A673 (cell line): ENCODE measurements at regions of chr12 and their contacts with region 1.

Region 1: DNA sequence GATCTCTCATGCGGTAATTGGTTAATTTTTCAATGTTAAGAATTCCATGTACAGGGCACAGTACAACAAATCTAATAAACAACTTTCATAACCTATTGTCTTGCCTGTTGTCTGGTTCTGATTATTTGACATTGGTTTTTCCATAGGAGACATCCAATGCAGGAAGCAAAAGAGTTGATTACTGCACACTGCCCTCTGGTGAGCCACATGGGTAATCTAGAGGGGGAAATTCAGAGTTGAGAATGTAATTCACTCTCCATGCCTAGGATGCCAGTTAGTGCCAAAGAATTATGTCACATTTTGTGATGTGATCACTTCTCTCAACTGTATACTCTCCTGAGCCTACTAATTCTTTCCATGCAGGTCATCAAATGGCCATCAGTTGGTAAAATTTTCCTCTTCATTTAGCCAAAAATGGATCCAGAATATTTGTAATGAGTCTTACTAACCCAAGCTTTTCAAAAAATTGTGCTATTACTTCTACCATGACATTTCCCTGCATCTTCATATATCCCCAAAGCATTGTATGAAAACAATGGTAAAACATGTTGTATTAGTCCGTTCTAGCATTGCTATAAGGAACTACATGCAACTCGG is 17.7 kb upstream of the CCDC91 start:
- DNase-seq: peak; percentile 77
- H3K4me3 ChIP-seq: no peak overlapping the region
- H3K27ac ChIP-seq: no peak overlapping the region
- H3K4me1 ChIP-seq: no peaks in the 10 kb centered on the region
- H3K27me3 ChIP-seq: no peaks in the 10 kb centered on the region
- CTCF ChIP-seq: peak; percentile 79

Region 2: DNA sequence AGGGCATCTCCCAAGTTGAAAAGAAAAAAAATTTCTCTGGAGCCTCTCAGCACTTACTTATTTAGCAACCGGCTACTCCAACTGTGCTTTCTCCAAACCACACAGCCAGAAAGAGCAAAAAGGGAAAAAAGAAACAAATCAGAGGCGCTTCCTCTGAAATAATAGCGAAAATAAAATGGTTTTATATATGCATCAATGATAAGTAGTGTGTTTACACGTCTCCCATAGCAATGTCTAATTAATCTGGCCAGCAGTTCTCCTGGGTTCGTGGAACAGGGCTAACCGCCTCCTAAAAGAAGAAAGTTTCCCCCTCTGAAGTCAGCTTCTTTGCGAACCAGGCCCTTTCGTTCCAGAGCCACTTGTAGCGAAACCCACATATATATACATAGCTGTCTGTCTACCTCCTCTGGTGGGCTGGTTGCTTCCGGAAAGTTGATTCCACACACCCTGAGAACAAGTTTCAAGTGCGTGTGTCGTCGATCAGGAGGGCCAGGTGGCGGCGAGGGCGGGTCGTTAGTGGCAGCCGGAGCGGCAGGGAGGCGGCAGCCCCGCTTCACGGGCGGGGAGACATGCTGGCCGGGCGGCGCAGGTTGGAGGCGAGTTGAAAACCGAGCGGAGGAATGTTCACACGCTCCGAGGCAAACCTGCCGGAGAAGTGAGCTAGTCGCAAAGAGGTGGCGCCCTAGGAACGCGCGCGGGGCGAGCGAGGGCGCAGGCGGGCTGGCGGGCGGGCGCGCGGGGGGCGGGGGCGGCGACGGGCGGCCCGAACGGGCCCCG is 202.7 kb before region 1 on chr12:
- CTCF ChIA-PET with region 1: interaction called, 3 read pairs
- POLR2A ChIA-PET with region 1: no interaction called
- intact Hi-C with region 1: loop called (anchors 2 kb)
- DNase-seq: peak; percentile 81
- H3K4me3 ChIP-seq: peak overlapping the region; percentile 53
- H3K27ac ChIP-seq: no peak overlapping the region
- H3K4me1 ChIP-seq: peaks cover 39% of the 10 kb centered on the region
- H3K27me3 ChIP-seq: peaks cover 5% of the 10 kb centered on the region
- CTCF ChIP-seq: peak; percentile 39

Region 3: GRCh38 chr12:28089338-28089737 is 83.2 kb before region 1 on chr12:
- CTCF ChIA-PET with region 1: no interaction called
- POLR2A ChIA-PET with region 1: no interaction called
- intact Hi-C with region 1: no loop called
- DNase-seq: peak; percentile 95
- H3K4me3 ChIP-seq: peak overlapping the region; percentile 5
- H3K27ac ChIP-seq: peak overlapping the region; percentile 78
- H3K4me1 ChIP-seq: peaks cover 58% of the 10 kb centered on the region
- H3K27me3 ChIP-seq: no peaks in the 10 kb centered on the region
- CTCF ChIP-seq: no peak

Region 4: DNA sequence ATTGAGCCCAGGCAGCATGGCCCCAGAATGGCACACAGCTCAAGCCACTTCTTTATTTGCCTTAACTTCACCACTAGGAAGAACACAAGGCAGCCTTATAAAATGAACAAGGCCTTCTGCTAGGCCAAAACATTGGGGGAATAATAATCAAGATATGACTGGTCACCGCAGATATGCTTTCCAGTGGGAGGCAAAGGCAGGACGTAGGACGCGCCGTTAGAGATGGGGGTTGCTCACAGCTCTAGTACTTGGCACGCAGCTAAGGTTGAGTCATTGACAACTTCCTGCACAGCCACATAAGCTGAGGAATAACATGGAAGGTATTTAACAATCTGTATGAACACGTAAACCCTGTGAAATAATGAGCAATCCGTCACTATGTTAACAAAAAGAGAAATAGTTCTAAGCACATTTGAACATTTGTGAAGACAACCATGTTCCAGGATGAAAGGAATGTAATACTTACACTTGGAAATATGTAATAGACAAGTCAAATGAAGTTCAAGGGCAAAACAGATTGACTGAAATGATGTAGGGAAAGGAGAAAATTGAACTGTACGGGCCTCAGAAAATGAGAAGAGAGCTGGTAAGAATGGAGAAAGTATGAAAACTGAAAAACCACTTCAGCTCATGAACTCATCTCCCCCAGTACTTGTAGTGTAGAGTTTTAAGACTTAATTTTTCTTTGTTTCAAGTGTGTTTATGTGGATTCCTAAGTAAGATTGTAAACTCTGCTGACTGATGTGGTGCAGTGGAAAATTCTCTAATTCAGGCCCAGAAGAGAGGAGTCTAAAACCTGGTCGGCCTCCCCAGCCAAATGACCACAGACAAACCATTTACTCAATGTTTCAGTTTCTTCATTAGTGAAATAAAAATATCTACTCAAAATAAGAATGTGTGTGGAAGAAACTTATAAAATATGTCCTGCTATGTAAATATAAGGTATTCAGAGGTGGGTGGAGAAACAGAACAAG is 41.6 kb before region 1 on chr12:
- CTCF ChIA-PET with region 1: no interaction called
- POLR2A ChIA-PET with region 1: no interaction called
- intact Hi-C with region 1: no loop called
- DNase-seq: peak; percentile 84
- H3K4me3 ChIP-seq: no peak overlapping the region
- H3K27ac ChIP-seq: no peak overlapping the region
- H3K4me1 ChIP-seq: peaks cover 13% of the 10 kb centered on the region
- H3K27me3 ChIP-seq: no peaks in the 10 kb centered on the region
- CTCF ChIP-seq: no peak

Region 5: GRCh38 chr12:28145216-28145615 is 27.3 kb before region 1 on chr12:
- CTCF ChIA-PET with region 1: no interaction called
- POLR2A ChIA-PET with region 1: no interaction called
- intact Hi-C with region 1: no loop called
- DNase-seq: no peak
- H3K4me3 ChIP-seq: no peak overlapping the region
- H3K27ac ChIP-seq: no peak overlapping the region
- H3K4me1 ChIP-seq: peaks cover 4% of the 10 kb centered on the region
- H3K27me3 ChIP-seq: no peaks in the 10 kb centered on the region
- CTCF ChIP-seq: no peak

Region 6: DNA sequence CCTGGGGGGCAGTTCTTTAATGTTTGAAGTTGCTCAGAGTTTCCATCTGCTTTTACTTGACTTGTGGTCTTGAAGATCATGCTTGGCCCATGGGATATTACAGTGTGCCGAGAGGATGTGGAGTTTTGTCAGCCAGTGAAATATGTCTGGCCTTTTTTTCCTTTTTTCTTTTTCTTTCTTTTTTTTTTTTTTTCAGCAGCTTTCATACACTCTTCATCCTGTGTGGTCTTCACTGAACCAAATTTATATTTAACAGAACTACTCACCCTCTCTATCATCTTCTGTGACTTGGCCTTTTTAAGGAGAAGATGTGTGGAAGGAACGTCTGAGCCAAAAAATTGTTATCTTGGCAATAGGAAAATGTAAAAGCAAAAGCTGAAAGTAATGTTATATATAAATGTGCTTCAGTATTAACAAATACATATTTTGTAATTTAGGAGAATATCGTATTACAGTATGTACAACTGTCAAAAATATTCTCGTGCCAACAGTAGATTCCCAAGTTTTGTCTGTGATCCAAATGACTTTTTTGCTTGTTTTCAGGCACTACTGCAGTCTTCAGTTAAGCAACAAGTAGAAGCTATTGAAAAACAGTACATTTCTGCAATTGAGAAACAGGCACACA is 218.3 kb after region 1 on chr12:
- CTCF ChIA-PET with region 1: no interaction called
- POLR2A ChIA-PET with region 1: no interaction called
- intact Hi-C with region 1: no loop called
- DNase-seq: no peak
- H3K4me3 ChIP-seq: no peak overlapping the region
- H3K27ac ChIP-seq: no peak overlapping the region
- H3K4me1 ChIP-seq: peaks cover 14% of the 10 kb centered on the region
- H3K27me3 ChIP-seq: no peaks in the 10 kb centered on the region
- CTCF ChIP-seq: no peak